ENCODE measurements at regions of chr19 and their contacts with region 1.

Region 1: GRCh38 chr19:56066152-56067023 is 54.7 kb downstream of the ZNF787 start:
- DNase-seq: peak; percentile 53
- H3K4me3 Mint-ChIP-seq: peak overlapping the region; percentile 54
- H3K27ac Mint-ChIP-seq: no peak overlapping the region
- H3K4me1 Mint-ChIP-seq: peaks cover 13% of the 10 kb centered on the region
- H3K27me3 Mint-ChIP-seq: peaks cover 6% of the 10 kb centered on the region

Region 2: GRCh38 chr19:56076498-56076897 is 10.1 kb after region 1 on chr19:
- CTCF ChIA-PET with region 1: interaction called, 12 read pairs
- POLR2A ChIA-PET with region 1: no interaction called
- DNase-seq: peak; percentile 41
- H3K4me3 Mint-ChIP-seq: no peak overlapping the region
- H3K27ac Mint-ChIP-seq: no peak overlapping the region
- H3K4me1 Mint-ChIP-seq: peaks cover 9% of the 10 kb centered on the region
- H3K27me3 Mint-ChIP-seq: peaks cover 4% of the 10 kb centered on the region